Activated CD4-positive, alpha-beta T cell treated with anti-CD3 and anti-CD28 coated beads for 36 hours (primary cell): ENCODE measurements at regions of chr19 and their contacts with region 1.

Region 1: GRCh38 chr19:43754503-43755255 is at the start of gene SMG9:
- DNase-seq: peak; percentile 99
- ATAC-seq: peak; percentile 75
- H3K4me3 Mint-ChIP-seq: peak within 1 kb of the TSS; percentile 99
- H3K27ac Mint-ChIP-seq: peak within 1 kb of the TSS; percentile 99
- H3K4me1 Mint-ChIP-seq: peaks cover 69% of the 10 kb centered on the region
- H3K27me3 Mint-ChIP-seq: no peaks in the 10 kb centered on the region
- total RNA-seq, gene SMG9: 64.4 to 65.2 TPM

Region 2: GRCh38 chr19:41959056-41960053 is 1795.3 kb before region 1 on chr19 and contains the start of gene RABAC1:
- CTCF ChIA-PET with region 1: no interaction called
- POLR2A ChIA-PET with region 1: no interaction called
- intact Hi-C with region 1: loop called in 1 of 2 experiments (anchors 5 kb)
- DNase-seq: peak; percentile 94
- ATAC-seq: peak; percentile 88
- H3K4me3 Mint-ChIP-seq: peak within 1 kb of the TSS; percentile 81
- H3K27ac Mint-ChIP-seq: peak within 1 kb of the TSS; percentile 87
- H3K4me1 Mint-ChIP-seq: peaks cover 16% of the 10 kb centered on the region
- H3K27me3 Mint-ChIP-seq: no peaks in the 10 kb centered on the region
- total RNA-seq, gene RABAC1: 35.3 to 49.7 TPM

Region 3: GRCh38 chr19:43575156-43575950 is 179.3 kb before region 1 on chr19 and contains the starts of genes PINLYP and XRCC1:
- CTCF ChIA-PET with region 1: no interaction called
- POLR2A ChIA-PET with region 1: no interaction called
- intact Hi-C with region 1: loop called in 1 of 2 experiments (anchors 1 kb)
- DNase-seq: peak; percentile 99
- ATAC-seq: peak; percentile 99
- H3K4me3 Mint-ChIP-seq: peak within 1 kb of the TSS; percentile 87
- H3K27ac Mint-ChIP-seq: peak within 1 kb of the TSS; percentile 94
- H3K4me1 Mint-ChIP-seq: peaks cover 41% of the 10 kb centered on the region
- H3K27me3 Mint-ChIP-seq: no peaks in the 10 kb centered on the region
- total RNA-seq, gene PINLYP: 3.5 to 3.6 TPM
- total RNA-seq, gene XRCC1: 31.6 to 40.0 TPM

Region 4: DNA sequence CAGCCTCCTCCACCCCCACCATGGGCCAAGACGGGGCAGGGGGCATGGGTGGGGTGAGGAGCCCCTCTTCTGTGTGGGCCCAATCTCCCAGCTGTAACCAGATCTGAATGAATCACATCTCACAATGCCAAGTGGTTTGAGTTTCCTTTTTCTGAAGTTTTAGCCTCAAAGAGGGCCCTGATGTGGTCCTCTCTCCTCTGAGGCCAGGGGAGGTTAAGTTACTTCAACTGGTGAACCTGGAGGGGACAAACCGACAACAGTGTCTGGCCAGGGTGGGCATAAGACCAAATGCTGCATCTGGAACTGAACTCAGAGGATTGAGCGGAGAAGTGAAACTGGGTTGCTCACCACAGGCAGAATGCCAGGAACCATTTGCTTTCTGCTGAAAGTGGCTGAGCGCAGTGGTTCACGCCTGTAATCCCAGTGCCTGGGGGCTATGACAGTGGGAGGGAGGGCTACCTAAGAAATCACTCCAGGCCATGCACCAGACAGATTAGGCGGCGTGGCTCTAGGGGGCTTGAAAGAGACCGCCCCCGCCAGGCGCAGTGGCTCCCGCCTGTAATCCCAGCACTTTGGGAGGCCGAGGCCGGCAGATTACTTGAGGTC is 54.2 kb before region 1 on chr19:
- CTCF ChIA-PET with region 1: no interaction called
- POLR2A ChIA-PET with region 1: no interaction called
- intact Hi-C with region 1: loop called in 1 of 2 experiments (anchors 1 kb)
- DNase-seq: peak; percentile 47
- ATAC-seq: peak; percentile 26
- H3K4me3 Mint-ChIP-seq: peak overlapping the region; percentile 69
- H3K27ac Mint-ChIP-seq: peak overlapping the region; percentile 99
- H3K4me1 Mint-ChIP-seq: peaks cover 21% of the 10 kb centered on the region
- H3K27me3 Mint-ChIP-seq: peaks cover 18% of the 10 kb centered on the region

Region 5: GRCh38 chr19:43784981-43785808 is 30.5 kb after region 1 on chr19:
- CTCF ChIA-PET with region 1: interaction called, 6 read pairs
- POLR2A ChIA-PET with region 1: interaction called, 19 read pairs
- intact Hi-C with region 1: loop called (anchors 1 kb)
- DNase-seq: peak; percentile 76
- ATAC-seq: peak; percentile 11
- H3K4me3 Mint-ChIP-seq: peak overlapping the region; percentile 57
- H3K27ac Mint-ChIP-seq: peak overlapping the region; percentile 81
- H3K4me1 Mint-ChIP-seq: peaks cover 39% of the 10 kb centered on the region
- H3K27me3 Mint-ChIP-seq: peaks cover 7% of the 10 kb centered on the region

Region 6: GRCh38 chr19:44746946-44747738 is 992.5 kb after region 1 on chr19:
- CTCF ChIA-PET with region 1: no interaction called
- POLR2A ChIA-PET with region 1: no interaction called
- intact Hi-C with region 1: loop called in 1 of 2 experiments (anchors 2 kb)
- DNase-seq: peak; percentile 98
- ATAC-seq: peak; percentile 85
- H3K4me3 Mint-ChIP-seq: peak overlapping the region; percentile 91
- H3K27ac Mint-ChIP-seq: peak overlapping the region; percentile 95
- H3K4me1 Mint-ChIP-seq: peaks cover 43% of the 10 kb centered on the region
- H3K27me3 Mint-ChIP-seq: no peaks in the 10 kb centered on the region